ENCODE measurements at regions of chr2 and their contacts with region 1.

Region 1: DNA sequence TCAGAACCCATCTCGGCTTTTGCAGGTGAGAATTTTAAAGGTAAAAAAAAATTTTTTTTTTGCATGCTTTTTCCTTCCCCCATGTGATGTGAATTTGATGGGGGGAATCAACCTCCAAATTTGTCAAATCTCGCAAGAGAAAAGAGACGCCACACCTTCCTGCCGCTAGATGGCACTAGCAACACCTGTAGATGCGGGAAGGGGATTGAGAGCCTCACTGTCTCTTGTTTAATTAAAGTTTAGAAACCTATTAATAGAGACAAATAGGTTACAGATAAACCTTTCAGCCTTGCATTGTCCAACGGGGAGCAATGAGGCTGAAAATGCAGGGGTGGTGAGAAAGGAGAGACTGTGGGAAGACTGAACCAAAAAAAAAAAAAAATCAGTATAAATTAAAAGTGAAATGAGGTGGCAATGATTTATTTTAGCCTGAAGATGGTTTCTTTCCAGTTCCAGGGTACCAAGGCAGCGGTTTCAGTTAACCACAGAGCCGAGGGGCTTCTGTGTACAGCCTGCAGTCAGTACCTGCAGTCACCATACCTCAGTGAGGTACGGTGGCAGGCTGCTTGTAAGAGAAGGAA is 84.6 kb downstream of the NRP2 start:
- DNase-seq: peak; percentile 20 to 67 (median 38)
- ATAC-seq: peak; percentile 39
- H3K4me3 ChIP-seq: no peak overlapping the region
- H3K4me3 Mint-ChIP-seq: no peak overlapping the region
- H3K27ac ChIP-seq: no peak overlapping the region
- H3K27ac Mint-ChIP-seq: no peak overlapping the region
- H3K4me1 ChIP-seq: peaks cover 6% of the 10 kb centered on the region
- H3K4me1 Mint-ChIP-seq: peaks cover 3% of the 10 kb centered on the region
- H3K27me3 ChIP-seq: peaks cover 12 to 27% of the 10 kb centered on the region in 2 experiments
- H3K27me3 Mint-ChIP-seq: peaks cover 53% of the 10 kb centered on the region
- CTCF ChIP-seq: peak; percentile 97

Region 2: GRCh38 chr2:205925373-205926337 is 158.8 kb after region 1 on chr2:
- CTCF ChIA-PET with region 1: no interaction called
- POLR2A ChIA-PET with region 1: no interaction called
- intact Hi-C with region 1: loop called (anchors 2 to 5 kb)
- DNase-seq: peak; percentile 46 to 80 (median 59)
- ATAC-seq: peak; percentile 76
- H3K4me3 ChIP-seq: no peak overlapping the region
- H3K4me3 Mint-ChIP-seq: no peak overlapping the region
- H3K27ac ChIP-seq: no peak overlapping the region
- H3K27ac Mint-ChIP-seq: no peak overlapping the region
- H3K4me1 ChIP-seq: peaks cover 9% of the 10 kb centered on the region
- H3K4me1 Mint-ChIP-seq: peaks cover 10% of the 10 kb centered on the region
- H3K27me3 ChIP-seq: peaks cover 20 to 26% of the 10 kb centered on the region in 2 experiments
- H3K27me3 Mint-ChIP-seq: peaks cover 68% of the 10 kb centered on the region
- CTCF ChIP-seq: peak; percentile 74

Measured in CD4-positive, alpha-beta T cell (primary cell).